Vagina (tissue), 2 donors: ENCODE measurements at regions of chr22 and their contacts with region 1.

Region 1: DNA sequence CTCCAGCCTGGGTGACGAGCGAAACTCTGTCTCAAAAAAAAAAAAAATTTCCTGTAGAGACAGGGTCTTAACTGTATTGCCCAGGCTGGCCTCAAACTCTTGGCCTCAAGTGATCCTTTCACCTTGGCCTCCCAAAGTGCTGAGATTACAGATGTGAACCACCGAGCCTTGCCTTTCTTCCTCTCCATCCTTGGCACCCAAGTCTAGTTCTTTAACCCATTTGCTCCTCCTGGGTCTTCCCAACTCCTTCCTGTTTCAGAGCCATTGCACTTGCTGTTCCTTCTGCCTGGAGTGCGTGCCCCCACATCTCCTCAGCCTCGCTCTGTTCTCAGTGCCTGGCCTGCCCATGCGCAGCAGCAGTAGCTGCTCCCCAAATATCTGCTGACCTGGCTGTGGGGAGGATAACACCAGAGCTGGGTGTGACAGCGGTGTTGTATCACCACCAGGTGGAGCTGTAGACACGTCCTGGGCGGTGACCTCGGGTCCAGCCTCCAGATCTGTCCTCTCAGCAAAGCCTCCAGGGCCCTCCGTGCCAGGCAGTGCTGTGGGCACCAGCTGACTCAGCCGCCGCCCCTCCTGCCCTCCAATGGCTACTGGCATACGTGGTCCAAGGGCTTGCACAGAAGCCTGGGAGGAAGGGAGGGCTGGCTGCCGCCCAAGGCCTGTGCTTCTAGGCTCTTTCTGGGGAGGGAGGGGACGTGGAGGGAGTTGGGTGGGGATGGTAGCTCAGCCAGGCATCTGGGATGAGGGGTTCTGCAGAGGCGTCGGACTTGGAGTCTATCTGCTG is 22.0 kb downstream of the TEF start:
- DNase-seq: no peak
- H3K4me3 ChIP-seq: no peak overlapping the region
- H3K27ac ChIP-seq: no peak overlapping the region
- H3K4me1 ChIP-seq: peaks cover 20% of the 10 kb centered on the region
- H3K27me3 ChIP-seq: no peaks in the 10 kb centered on the region
- CTCF ChIP-seq: peak; percentile 90 to 97 (median 95)
- POLR2A ChIP-seq: no peak

Region 2: GRCh38 chr22:41511521-41511968 is 107.8 kb after region 1 on chr22:
- intact Hi-C with region 1: loop called (anchors 2 kb)
- DNase-seq: no peak
- H3K4me3 ChIP-seq: no peak overlapping the region
- H3K27ac ChIP-seq: no peak overlapping the region
- H3K4me1 ChIP-seq: peaks cover 22% of the 10 kb centered on the region
- H3K27me3 ChIP-seq: no peaks in the 10 kb centered on the region
- CTCF ChIP-seq: no peak
- POLR2A ChIP-seq: no peak